ENCODE measurements at regions of chr19 and their contacts with region 1.

Region 1: GRCh38 chr19:18112989-18113478 is 15.5 kb downstream of the MAST3 start:
- DNase-seq: peak; percentile 64
- H3K4me3 Mint-ChIP-seq: no peak overlapping the region
- H3K27ac Mint-ChIP-seq: no peak overlapping the region
- H3K4me1 Mint-ChIP-seq: peaks cover 13% of the 10 kb centered on the region
- H3K27me3 Mint-ChIP-seq: no peaks in the 10 kb centered on the region

Region 2: GRCh38 chr19:18063463-18063862 is 49.6 kb before region 1 on chr19:
- intact Hi-C with region 1: no loop called
- DNase-seq: no peak
- H3K4me3 Mint-ChIP-seq: no peak overlapping the region
- H3K27ac Mint-ChIP-seq: no peak overlapping the region
- H3K4me1 Mint-ChIP-seq: peaks cover under 1% of the 10 kb centered on the region
- H3K27me3 Mint-ChIP-seq: no peaks in the 10 kb centered on the region

Region 3: DNA sequence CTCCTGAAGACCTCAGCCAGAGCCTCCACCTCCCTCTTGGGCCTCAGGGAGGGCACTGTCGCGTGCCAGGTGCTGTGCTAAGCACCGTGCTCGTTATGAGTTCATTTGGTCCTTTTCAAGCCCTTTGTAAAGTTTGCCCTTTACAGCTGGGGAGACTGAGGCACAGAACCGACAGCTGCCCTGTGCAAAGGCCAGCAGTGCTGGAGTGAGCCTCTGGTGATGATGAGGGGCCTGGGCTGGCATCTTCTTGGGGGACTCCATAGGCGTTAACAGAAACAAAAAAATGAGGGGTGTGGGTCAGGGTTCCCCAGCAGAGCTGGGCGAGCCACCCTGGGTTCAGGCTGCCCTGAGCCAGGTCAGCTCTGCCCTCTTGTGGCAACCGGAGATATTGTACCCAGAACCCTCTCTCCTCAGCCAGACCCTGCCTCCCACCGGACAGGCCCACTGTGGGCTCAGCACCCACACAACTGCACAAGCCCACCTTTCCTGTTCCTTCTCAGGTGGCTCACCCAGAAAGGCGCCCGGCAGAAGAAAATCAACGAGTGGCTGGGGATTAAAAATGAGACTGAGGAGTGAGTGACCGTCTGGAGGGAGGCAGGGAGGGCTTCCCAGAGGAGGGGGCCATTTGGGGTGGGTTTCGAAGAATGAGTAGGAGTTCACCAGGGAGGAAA is 55.1 kb after region 1 on chr19:
- intact Hi-C with region 1: loop called (anchors 1 kb)
- DNase-seq: peak; percentile 47
- H3K4me3 Mint-ChIP-seq: no peak overlapping the region
- H3K27ac Mint-ChIP-seq: no peak overlapping the region
- H3K4me1 Mint-ChIP-seq: peaks cover 8% of the 10 kb centered on the region
- H3K27me3 Mint-ChIP-seq: no peaks in the 10 kb centered on the region

Region 4: DNA sequence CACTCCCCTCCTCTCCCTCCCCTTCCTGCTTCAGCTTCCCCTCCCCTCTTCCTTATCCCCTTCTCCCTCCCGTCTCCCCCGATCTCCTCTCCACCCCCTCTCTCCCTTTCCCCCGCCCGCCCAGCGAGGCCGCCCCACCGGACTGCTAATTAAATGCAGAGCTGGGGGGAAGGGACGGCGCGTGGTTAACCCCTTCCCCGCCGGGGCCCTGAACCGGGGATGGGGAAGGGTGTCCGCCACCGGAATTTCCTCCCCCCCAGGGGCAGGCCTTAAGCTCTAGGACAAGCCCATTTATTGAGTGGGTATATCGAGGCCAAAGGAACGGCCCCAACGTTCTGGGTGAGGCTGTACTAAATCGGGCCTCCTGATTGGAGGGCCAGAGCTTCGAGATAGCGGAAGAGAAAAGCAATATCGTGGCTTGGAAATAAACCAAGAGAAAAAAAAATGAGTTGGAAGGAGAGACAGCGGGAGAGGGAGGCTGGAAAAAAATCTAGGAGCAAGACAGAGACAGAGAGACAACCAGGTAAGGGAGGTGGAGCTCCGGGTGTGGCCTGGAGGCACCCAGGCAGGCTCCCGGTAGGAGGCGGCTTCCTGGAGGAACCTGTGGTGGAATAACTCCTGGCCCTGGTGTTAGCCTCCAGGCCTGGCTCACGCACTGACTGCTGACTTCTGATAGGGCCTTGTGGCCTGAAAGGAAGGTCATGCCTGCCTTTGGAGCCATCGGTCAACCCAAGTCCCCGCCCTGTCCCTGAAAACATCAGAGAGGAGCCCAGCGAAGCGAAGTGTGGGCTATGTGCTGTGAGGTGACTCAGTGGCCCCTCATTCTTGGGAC is 180.0 kb after region 1 on chr19:
- intact Hi-C with region 1: no loop called
- DNase-seq: peak; percentile 55
- H3K4me3 Mint-ChIP-seq: peak overlapping the region; percentile 96
- H3K27ac Mint-ChIP-seq: peak overlapping the region; percentile 99
- H3K4me1 Mint-ChIP-seq: peaks cover 53% of the 10 kb centered on the region
- H3K27me3 Mint-ChIP-seq: no peaks in the 10 kb centered on the region

Measured in activated T-helper 2 cell treated with anti-CD3 and anti-CD28 coated beads, Interferon-gamma antibody, Interleukin-2, Interleukin-4, amounts not matched to agents 10 μg/mL and 5 μg/mL and 100 μg/mL, durations not matched to agents 14 hours and 24 hours and 36 hours (primary cell).